Activated CD4-positive, alpha-beta T cell treated with anti-CD3 and anti-CD28 coated beads, Interleukin-2, amount 10 ng/mL, durations not matched to agents 7 days and 5 days (primary cell): ENCODE measurements at regions of chr10 and their contacts with region 1.

Region 1: DNA sequence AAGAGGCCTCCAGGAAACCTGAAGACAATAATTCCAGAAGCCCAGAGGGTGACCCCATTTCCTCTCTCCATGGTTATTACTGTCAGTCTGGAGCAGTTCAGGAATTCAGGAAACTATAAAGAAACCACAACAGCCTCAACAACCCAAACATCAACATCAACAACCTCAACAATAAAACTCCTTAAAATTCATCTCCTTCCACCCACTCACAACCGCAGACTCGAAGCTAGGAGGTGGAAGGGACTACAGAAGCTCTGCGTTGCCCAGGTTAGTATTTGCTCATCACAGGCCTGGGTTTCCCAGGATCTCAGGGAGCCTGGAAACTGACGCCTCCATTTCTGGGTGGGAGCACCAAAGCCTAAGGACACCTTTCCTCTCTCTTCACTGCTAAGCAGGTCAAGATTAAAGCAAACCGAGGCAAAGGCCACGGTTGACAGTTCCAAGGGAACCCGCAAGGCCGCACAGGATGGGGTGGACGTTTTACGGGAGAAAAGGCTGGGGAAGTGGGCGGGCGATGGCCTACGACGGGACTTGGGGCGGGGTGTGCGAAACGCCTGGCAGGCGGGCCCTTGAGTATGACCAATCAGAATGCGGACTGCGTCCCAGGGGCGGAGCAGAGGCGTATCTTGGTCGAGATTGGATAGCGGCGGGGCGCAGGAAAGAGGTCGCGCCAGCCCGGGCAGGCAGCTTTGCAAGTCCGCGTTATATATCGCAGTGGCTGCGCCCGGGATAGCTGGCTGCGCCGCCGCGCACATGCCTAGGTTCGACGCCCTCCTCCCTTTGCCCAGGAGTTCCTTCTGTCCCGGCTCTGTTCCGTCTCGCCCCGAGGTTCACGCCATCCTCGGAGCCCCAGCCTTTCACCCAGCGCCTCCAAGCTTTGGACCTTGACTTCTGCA is at the start of gene ELOVL3:
- DNase-seq: peak; percentile 87
- H3K4me3 Mint-ChIP-seq: peak within 1 kb of the TSS; percentile 42
- H3K27ac Mint-ChIP-seq: no peak within 1 kb of the TSS
- H3K4me1 Mint-ChIP-seq: peaks cover 24% of the 10 kb centered on the region
- H3K27me3 Mint-ChIP-seq: peaks cover 59% of the 10 kb centered on the region
- total RNA-seq, gene ELOVL3: not detected

Region 2: GRCh38 chr10:101617102-101617823 is 608.6 kb before region 1 on chr10:
- CTCF ChIA-PET with region 1: no interaction called
- POLR2A ChIA-PET with region 1: no interaction called
- DNase-seq: no peak
- H3K4me3 Mint-ChIP-seq: no peak overlapping the region
- H3K27ac Mint-ChIP-seq: no peak overlapping the region
- H3K4me1 Mint-ChIP-seq: no peaks in the 10 kb centered on the region
- H3K27me3 Mint-ChIP-seq: no peaks in the 10 kb centered on the region

Region 3: DNA sequence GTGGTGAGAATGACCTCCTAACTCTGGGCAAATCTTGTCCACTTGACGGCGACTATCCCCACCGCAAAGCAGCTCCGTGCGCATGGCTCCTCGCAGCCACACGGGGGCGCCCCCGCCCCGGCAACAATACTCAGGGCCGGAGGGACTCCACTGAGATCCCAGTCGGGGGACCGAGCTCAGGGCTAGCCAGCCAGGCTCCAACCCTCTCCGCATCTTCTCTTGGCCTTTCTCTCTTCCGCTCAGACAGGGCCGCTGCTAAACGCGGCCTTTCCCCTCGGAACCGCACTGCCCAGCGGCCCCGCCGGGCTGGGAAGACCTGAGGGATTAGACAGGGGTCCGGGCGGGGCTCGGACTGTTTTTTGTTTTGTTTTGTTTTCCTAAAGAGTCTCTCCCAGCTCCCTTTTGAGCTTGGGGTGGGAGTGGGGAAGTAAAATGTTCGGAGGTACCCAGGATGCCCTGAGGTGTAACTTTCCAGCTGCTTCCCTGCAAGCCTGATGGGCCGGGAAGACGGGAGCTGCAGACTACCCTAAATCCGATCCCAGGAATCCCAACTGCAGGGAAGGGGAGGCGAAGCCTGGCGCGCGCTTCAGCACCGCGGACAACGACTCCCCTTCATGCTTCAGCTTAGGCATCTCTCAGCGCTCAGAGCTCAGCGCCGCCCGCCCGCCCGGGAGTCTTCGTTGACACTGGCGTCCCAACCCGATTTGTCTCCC is 385.0 kb before region 1 on chr10:
- CTCF ChIA-PET with region 1: no interaction called
- POLR2A ChIA-PET with region 1: no interaction called
- DNase-seq: peak; percentile 75
- H3K4me3 Mint-ChIP-seq: peak overlapping the region; percentile 73
- H3K27ac Mint-ChIP-seq: no peak overlapping the region
- H3K4me1 Mint-ChIP-seq: peaks cover 50% of the 10 kb centered on the region
- H3K27me3 Mint-ChIP-seq: peaks cover 23% of the 10 kb centered on the region

Region 4: GRCh38 chr10:102040305-102041050 is 185.4 kb before region 1 on chr10:
- CTCF ChIA-PET with region 1: no interaction called
- POLR2A ChIA-PET with region 1: no interaction called
- DNase-seq: no peak
- H3K4me3 Mint-ChIP-seq: no peak overlapping the region
- H3K27ac Mint-ChIP-seq: no peak overlapping the region
- H3K4me1 Mint-ChIP-seq: peaks cover 5% of the 10 kb centered on the region
- H3K27me3 Mint-ChIP-seq: no peaks in the 10 kb centered on the region

Region 5: DNA sequence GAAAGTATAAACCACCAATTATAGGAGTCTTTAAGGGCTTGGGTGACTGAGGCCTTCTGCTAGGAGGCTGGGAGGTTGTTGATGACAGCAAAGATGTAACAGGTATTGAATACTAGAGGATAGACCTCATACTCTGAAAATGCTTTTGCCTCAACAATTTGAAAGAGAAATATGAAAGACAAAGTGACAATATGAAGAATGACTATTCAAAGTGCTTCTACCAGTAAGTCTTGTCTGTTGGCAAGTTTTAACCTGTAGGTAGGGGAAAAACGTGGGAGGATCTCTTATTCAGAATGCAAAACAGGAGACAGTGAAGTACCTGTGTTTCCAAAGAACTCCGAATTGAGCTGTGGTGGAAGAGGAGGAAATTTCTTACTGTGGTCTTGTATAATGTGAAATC is 57.6 kb after region 1 on chr10:
- CTCF ChIA-PET with region 1: interaction called, 10 read pairs
- POLR2A ChIA-PET with region 1: no interaction called
- DNase-seq: no peak
- H3K4me3 Mint-ChIP-seq: peak overlapping the region; percentile 13
- H3K27ac Mint-ChIP-seq: peak overlapping the region; percentile 77
- H3K4me1 Mint-ChIP-seq: peaks cover 66% of the 10 kb centered on the region
- H3K27me3 Mint-ChIP-seq: no peaks in the 10 kb centered on the region

Region 6: GRCh38 chr10:102358712-102359382 is 133.0 kb after region 1 on chr10:
- CTCF ChIA-PET with region 1: interaction called, 170 read pairs
- POLR2A ChIA-PET with region 1: no interaction called
- DNase-seq: no peak
- H3K4me3 Mint-ChIP-seq: no peak overlapping the region
- H3K27ac Mint-ChIP-seq: no peak overlapping the region
- H3K4me1 Mint-ChIP-seq: peaks cover 13% of the 10 kb centered on the region
- H3K27me3 Mint-ChIP-seq: no peaks in the 10 kb centered on the region

Region 7: GRCh38 chr10:102408728-102409603 is 183.1 kb after region 1 on chr10:
- CTCF ChIA-PET with region 1: interaction called, 51 read pairs
- POLR2A ChIA-PET with region 1: no interaction called
- DNase-seq: peak; percentile 51
- H3K4me3 Mint-ChIP-seq: peak overlapping the region; percentile 44
- H3K27ac Mint-ChIP-seq: no peak overlapping the region
- H3K4me1 Mint-ChIP-seq: peaks cover 31% of the 10 kb centered on the region
- H3K27me3 Mint-ChIP-seq: peaks cover 24% of the 10 kb centered on the region

Region 8: GRCh38 chr10:102476466-102477141 is 250.7 kb after region 1 on chr10:
- CTCF ChIA-PET with region 1: interaction called, 15 read pairs
- POLR2A ChIA-PET with region 1: no interaction called
- DNase-seq: no peak
- H3K4me3 Mint-ChIP-seq: no peak overlapping the region
- H3K27ac Mint-ChIP-seq: peak overlapping the region; percentile 69
- H3K4me1 Mint-ChIP-seq: peaks cover 24% of the 10 kb centered on the region
- H3K27me3 Mint-ChIP-seq: no peaks in the 10 kb centered on the region